ENCODE measurements at regions of chr5 and their contacts with region 1.

Region 1: DNA sequence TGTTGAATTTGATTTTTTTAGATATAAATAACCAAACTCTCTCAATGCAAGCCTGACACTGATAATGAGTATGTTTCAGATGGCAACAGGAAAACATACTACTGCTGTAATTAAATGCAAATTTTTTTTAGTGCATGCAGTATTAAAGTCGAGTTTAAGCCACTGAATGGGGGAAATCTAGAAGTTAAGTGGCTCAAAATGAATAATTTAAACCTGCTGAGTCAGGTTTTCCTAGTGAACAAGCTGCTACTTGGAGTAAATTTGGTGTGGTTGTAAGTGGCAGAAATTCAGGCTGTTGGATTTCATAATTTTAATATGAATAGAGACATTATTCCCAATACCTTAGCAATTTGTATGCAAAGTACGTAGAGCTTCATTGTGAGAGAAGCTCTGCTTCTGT is 121.8 kb downstream of the SLF1 start:
- DNase-seq: no peak
- H3K4me3 ChIP-seq: no peak overlapping the region
- H3K27ac ChIP-seq: no peak overlapping the region
- H3K4me1 ChIP-seq: no peaks in the 10 kb centered on the region
- H3K27me3 ChIP-seq: no peaks in the 10 kb centered on the region
- CTCF ChIP-seq: no peak
- EP300 ChIP-seq: no peak
- RAD21 ChIP-seq: no peak

Region 2: DNA sequence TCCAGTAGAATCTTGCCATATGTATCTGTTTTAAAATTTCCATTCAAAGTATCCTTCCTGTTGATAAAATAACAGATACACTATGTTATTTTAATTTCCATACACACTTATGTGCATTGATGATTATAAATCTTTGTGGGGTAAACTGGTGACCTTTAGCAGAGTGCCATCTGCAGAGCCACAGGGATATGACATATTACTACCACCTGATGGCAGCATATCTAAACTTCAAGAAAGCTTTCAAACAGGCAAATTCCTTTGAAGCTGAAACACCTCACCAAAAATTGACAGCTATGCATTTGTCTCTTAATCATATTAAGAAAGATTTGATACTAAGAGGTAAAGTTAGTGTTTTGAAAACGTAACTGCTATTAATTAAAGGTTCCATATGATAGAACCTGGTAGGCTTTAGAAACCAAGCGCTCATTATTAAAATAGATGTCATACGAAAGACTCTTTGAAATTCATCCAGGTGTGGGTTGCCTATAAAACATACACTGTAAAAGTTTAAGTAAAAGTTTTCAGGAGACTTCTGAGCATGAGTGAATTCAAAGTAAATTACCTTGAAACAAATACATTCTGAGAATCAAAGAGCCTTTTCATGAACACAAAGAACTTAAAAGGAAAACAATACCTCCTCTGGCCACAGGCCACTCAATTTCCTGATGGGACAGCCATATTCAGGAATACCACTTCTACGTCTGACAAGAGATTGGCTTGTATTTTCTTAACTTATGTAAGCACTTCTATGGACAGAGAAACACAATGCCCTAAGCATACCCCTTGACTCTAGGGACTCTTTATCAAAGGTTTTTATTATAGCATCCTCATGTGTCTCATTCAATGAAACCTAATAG is 215.2 kb before region 1 on chr5:
- CTCF ChIA-PET with region 1: interaction called, 18 read pairs
- POLR2A ChIA-PET with region 1: no interaction called
- DNase-seq: peak; percentile 46
- H3K4me3 ChIP-seq: no peak overlapping the region
- H3K27ac ChIP-seq: peak overlapping the region in 1 of 2 experiments; percentile 16; a peak in 1 of 4 replicates
- H3K4me1 ChIP-seq: peaks cover 0 to 20% of the 10 kb centered on the region in 2 experiments; a peak in 1 of 4 replicates
- H3K27me3 ChIP-seq: no peaks in the 10 kb centered on the region
- CTCF ChIP-seq: peak; percentile 72
- EP300 ChIP-seq: no peak
- RAD21 ChIP-seq: peak; percentile 85

Region 3: DNA sequence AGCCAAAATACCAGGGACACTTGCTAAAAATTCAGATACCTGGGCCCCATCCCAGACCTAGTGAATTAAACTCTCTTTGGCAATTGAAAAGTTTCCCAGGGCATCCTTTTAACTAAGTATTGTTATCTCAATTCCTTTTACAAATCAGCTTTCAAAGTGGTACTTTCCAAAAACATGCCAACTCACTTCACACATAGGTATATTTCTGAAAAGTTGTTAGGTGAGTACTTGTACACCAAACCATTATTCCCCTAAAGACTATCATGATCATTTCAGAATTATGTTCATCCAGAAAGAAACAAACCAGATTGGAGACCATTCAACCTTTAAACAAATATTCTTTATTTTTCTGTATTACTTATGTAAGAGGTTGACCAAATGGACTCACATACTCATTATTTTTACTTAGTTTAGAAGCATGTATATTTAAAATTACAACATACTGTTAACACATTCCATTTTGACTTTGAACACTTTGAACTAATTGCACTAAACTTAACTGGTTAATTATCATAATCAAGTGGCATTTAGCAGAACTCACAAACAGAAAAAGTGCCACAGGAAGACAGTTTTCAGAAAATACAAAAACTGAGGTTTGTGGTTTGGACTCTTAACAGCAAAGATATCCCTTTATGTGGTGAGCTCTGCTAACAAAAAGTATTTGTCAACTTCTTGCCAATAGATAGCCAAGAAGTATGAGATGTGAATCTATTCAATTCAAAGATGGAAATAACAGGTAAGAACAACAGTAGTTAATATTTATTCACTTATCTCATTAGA is 162.6 kb before region 1 on chr5:
- CTCF ChIA-PET with region 1: no interaction called
- POLR2A ChIA-PET with region 1: no interaction called
- DNase-seq: no peak
- H3K4me3 ChIP-seq: no peak overlapping the region
- H3K27ac ChIP-seq: no peak overlapping the region
- H3K4me1 ChIP-seq: peaks cover 0 to 2% of the 10 kb centered on the region in 2 experiments; a peak in 2 of 4 replicates
- H3K27me3 ChIP-seq: no peaks in the 10 kb centered on the region
- CTCF ChIP-seq: no peak
- EP300 ChIP-seq: no peak
- RAD21 ChIP-seq: no peak

Region 4: GRCh38 chr5:94595281-94595840 is 144.9 kb before region 1 on chr5:
- CTCF ChIA-PET with region 1: no interaction called
- POLR2A ChIA-PET with region 1: no interaction called
- DNase-seq: no peak
- H3K4me3 ChIP-seq: no peak overlapping the region
- H3K27ac ChIP-seq: no peak overlapping the region
- H3K4me1 ChIP-seq: no peaks in the 10 kb centered on the region
- H3K27me3 ChIP-seq: no peaks in the 10 kb centered on the region
- CTCF ChIP-seq: no peak
- EP300 ChIP-seq: no peak
- RAD21 ChIP-seq: no peak

Region 5: DNA sequence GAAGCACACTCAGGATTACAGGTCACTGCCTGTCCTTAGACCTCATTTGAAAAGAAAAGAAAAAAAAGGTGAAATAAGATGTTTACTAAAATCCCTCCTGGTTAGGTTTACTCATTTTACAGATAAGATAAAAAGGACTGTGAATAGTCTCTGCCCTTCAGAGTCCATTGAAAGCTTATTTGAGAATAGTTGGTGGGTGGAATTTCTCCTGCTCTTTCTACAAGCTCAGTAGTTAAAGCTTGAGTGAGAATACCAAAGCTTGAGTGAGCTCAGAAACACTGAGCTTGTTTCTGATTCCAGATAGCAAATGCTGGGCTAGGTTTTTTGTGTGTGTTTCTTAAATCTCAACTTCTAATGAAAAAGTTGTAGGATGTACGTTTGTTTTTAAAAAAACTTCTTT is 15.1 kb before region 1 on chr5:
- CTCF ChIA-PET with region 1: interaction called, 15 read pairs
- POLR2A ChIA-PET with region 1: interaction called, 4 read pairs
- DNase-seq: no peak
- H3K4me3 ChIP-seq: no peak overlapping the region
- H3K27ac ChIP-seq: no peak overlapping the region
- H3K4me1 ChIP-seq: no peaks in the 10 kb centered on the region; a peak in 1 of 4 replicates
- H3K27me3 ChIP-seq: no peaks in the 10 kb centered on the region
- CTCF ChIP-seq: no peak
- EP300 ChIP-seq: no peak
- RAD21 ChIP-seq: no peak